ENCODE measurements at regions of chr14 and their contacts with region 1.

Region 1: DNA sequence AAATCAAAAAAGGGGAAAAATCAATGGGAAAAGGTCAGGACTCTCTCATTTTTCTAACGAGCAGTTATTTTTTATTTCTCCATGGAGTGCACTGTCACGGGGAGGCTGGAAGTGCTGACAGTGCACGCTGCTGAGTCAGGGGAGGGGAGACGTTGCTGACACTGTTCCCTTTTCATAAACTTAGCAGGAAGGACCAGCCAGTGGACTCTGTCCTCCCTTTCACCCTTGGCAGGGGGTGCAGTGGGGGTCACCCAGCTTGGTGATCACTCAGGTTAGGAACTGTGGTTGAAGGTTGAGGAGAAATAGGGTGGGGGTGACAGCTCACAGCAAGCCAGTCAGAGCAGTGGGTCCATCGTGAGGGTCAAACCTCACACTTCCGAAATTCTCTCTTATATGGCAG is 65.6 kb upstream of the FUT8 start:
- DNase-seq: no peak
- ATAC-seq: no peak
- H3K4me3 ChIP-seq: no peak overlapping the region
- H3K4me3 Mint-ChIP-seq: no peak overlapping the region
- H3K27ac ChIP-seq: no peak overlapping the region
- H3K27ac Mint-ChIP-seq: no peak overlapping the region
- H3K4me1 ChIP-seq: no peaks in the 10 kb centered on the region
- H3K4me1 Mint-ChIP-seq: peaks cover 1 to 14% (median 4%) of the 10 kb centered on the region in 3 donors
- H3K27me3 ChIP-seq: no peaks in the 10 kb centered on the region
- H3K27me3 Mint-ChIP-seq: no peaks in the 10 kb centered on the region

Region 2: DNA sequence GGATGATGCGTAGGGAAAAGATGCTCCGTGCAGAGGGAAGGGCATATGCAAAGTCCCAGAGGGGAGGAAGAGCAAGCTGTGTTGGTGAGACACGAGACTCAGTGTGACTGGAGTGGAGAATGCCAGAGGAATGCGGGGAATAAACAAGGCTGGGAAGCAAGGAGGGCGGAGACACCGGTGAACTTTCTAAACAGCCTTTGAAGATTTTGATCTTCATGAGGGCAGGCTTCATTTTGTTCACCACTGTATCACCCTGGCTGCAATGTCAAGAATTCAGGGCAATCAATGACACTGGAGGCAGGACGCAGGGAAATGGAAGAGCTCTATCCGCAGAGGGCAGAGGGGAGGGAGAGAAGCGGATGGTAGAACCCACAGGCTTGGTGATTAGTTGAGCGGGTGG is 601.4 kb after region 1 on chr14:
- CTCF ChIA-PET with region 1: interaction called in 1 of 2 experiments, 10 read pairs
- POLR2A ChIA-PET with region 1: no interaction called
- DNase-seq: no peak
- ATAC-seq: no peak
- H3K4me3 ChIP-seq: no peak overlapping the region
- H3K4me3 Mint-ChIP-seq: no peak overlapping the region
- H3K27ac ChIP-seq: no peak overlapping the region
- H3K27ac Mint-ChIP-seq: no peak overlapping the region
- H3K4me1 ChIP-seq: peaks cover 7 to 17% of the 10 kb centered on the region in 2 experiments
- H3K4me1 Mint-ChIP-seq: peaks cover 38 to 53% (median 46%) of the 10 kb centered on the region in 3 donors
- H3K27me3 ChIP-seq: no peaks in the 10 kb centered on the region
- H3K27me3 Mint-ChIP-seq: no peaks in the 10 kb centered on the region